ENCODE measurements at regions of chrX and their contacts with region 1.

Region 1: DNA sequence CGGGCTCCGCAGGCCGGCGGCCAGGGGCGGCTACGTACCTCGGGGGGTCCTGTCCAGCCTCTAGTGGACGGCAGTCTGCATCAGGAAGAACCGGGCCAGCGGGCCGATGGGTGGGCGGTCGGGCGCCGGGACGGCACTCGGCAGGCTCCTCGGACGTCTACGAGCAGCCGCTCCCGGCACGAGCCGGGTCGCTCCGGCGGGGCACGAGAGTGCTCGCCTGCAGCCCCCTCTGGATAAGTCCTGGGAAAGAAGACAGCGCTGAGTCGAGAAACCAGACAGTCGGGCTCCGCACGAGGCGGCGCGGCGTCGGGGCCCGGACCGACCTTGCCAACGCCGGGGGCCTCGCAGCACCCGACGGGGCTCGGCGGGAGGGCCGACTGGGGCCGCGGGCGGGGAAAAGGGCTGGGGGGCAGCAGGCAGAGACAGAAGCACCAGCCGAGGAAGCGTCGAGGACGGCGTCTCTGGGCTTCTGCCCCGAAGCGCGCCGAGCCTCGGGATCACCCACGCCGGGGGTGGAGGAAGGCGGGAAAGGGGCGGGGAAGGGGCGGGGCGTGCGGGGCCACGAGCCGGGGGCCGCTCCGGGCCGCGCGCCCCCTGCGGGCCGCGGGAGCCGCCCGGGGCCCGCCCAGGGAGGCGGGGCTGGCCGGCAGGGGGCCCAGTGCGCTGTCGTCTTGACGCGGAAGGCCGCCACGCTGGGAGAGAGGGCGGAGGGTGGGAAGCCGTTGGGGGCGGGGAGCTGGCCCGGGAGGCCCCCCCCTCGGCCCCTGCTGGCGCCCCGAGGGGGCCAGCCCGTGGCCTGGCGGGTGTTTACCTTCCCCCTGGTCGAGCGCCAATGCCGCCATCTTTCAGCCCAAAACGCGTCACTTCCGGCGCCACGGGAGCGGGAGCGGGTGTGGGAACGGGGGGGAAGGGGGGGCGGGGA is 1.9 kb downstream of the KLHL15 start:
- DNase-seq: peak; percentile 93

Region 2: GRCh38 chrX:23667239-23668177 is 357.6 kb before region 1 on chrX and contains the start of gene PRDX4:
- intact Hi-C with region 1: loop called (anchors 5 kb)
- DNase-seq: peak; percentile 95
- total RNA-seq, gene PRDX4: 38.5 TPM

Region 3: GRCh38 chrX:23782863-23783568 is 242.1 kb before region 1 on chrX and contains the start of gene SAT1:
- intact Hi-C with region 1: loop called (anchors 10 kb)
- DNase-seq: peak; percentile 97
- total RNA-seq, gene SAT1: 156 TPM

Region 4: DNA sequence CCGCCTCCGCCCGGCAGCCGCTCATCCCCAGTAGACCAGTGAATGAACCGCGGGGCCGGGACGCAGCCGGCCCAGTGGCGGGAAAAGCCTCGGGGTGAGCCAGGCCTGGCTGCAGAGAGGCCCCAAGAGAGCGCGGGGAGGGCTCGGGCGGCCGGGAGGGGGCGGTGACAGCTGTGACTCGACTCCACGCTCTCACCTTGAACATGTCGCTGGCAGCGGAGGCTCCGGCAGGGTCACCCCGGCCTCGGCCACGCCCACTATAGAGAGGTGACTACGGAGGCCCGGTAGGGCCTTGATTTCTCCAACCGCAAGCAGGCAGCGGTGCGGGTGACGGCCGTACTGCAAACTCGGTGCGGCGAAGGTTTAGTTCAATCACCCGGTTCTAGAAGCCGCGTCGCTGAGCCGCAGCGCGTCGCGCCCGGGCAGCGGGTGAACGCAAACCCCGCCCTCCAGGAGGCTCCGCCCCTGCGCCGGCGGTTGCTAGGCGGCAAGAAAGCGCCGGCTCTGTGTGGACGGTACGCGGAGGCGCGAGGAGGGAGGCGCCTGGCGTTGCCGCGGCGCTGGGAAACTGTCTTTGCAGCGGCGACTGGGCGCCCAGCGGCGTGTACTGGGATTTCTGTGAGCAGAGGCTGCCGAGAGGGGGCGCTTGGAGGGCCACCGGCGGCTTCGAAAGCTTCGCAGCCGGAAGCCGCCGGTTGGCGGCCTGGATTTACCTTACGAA is 117.4 kb before region 1 on chrX and contains the starts of genes APOO and CXorf58:
- intact Hi-C with region 1: loop called (anchors 5 kb)
- DNase-seq: peak; percentile 95
- total RNA-seq, gene APOO: 76.4 TPM
- total RNA-seq, gene CXorf58: not detected

Measured in cardiac septum (tissue), 1 donor.